HCT116 (cell line): ENCODE measurements at regions of chr3 and their contacts with region 1.

Region 1: GRCh38 chr3:67755643-67756042 is 101.2 kb upstream of the SUCLG2 start:
- DNase-seq: no peak
- ATAC-seq: no peak
- H3K4me3 ChIP-seq: no peak overlapping the region
- H3K27ac ChIP-seq: no peak overlapping the region
- H3K4me1 ChIP-seq: no peaks in the 10 kb centered on the region
- H3K27me3 ChIP-seq: no peaks in the 10 kb centered on the region
- CTCF ChIP-seq: no peak
- POLR2A ChIP-seq: no peak
- RAD21 ChIP-seq: no peak

Region 2: GRCh38 chr3:67489816-67490215 is 265.8 kb before region 1 on chr3:
- CTCF ChIA-PET with region 1: no interaction called
- POLR2A ChIA-PET with region 1: no interaction called
- RAD21 ChIA-PET with region 1: no interaction called
- intact Hi-C with region 1: loop called (anchors 5 kb)
- DNase-seq: no peak
- ATAC-seq: no peak
- H3K4me3 ChIP-seq: no peak overlapping the region
- H3K27ac ChIP-seq: no peak overlapping the region
- H3K4me1 ChIP-seq: no peaks in the 10 kb centered on the region
- H3K27me3 ChIP-seq: no peaks in the 10 kb centered on the region
- CTCF ChIP-seq: no peak
- POLR2A ChIP-seq: no peak
- RAD21 ChIP-seq: no peak

Region 3: GRCh38 chr3:67739851-67740250 is 15.8 kb before region 1 on chr3:
- CTCF ChIA-PET with region 1: no interaction called
- POLR2A ChIA-PET with region 1: no interaction called
- RAD21 ChIA-PET with region 1: no interaction called
- intact Hi-C with region 1: no loop called
- DNase-seq: no peak
- ATAC-seq: no peak
- H3K4me3 ChIP-seq: no peak overlapping the region
- H3K27ac ChIP-seq: no peak overlapping the region
- H3K4me1 ChIP-seq: no peaks in the 10 kb centered on the region
- H3K27me3 ChIP-seq: 0 out of 2 replicates have a peak, but pooled peaks cover 3% of the 10 kb centered on the region
- CTCF ChIP-seq: no peak
- POLR2A ChIP-seq: no peak
- RAD21 ChIP-seq: no peak